A673 (cell line): ENCODE measurements at regions of chr9 and their contacts with region 1.

Region 1: DNA sequence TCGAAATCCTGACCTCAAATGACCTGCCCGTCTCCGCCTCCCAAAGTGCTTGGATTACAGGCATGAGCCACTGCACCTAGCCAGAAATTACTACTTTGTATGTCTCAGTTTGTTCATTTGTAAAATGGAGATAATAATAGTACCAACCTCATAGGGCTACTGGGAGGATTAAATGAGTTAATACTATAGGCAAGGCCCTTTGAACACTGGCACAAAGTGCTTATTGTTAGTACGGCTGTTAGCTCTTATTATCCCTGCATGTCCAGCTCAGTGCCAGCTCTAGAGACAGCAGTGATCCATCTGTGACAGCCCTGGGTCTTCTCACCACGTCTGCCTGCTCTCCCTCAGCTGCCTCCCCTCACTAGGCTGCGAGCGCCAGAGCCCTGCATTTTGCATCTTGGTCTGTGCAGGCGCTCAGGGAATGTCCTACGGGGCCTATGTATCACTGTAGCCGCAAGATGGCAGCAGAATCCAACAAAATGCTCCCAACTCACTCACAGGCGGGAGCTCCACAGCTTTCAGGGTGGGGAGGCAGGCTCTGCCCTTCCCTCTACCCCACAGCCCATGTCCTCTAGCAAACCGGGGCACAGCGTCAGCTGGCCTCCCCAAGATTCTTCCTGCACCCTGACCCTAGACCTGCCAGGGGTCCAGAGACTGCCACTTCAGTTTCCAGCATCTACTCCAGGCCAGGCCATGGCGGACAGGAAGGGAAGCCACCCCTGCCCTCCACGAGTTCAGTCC is 17.7 kb upstream of the AKNA start:
- DNase-seq: peak; percentile 88
- H3K4me3 ChIP-seq: no peak overlapping the region
- H3K27ac ChIP-seq: no peak overlapping the region
- H3K4me1 ChIP-seq: no peaks in the 10 kb centered on the region
- H3K27me3 ChIP-seq: no peaks in the 10 kb centered on the region
- CTCF ChIP-seq: peak; percentile 84

Region 2: GRCh38 chr9:114738581-114739316 is 333.3 kb after region 1 on chr9:
- CTCF ChIA-PET with region 1: no interaction called
- POLR2A ChIA-PET with region 1: no interaction called
- intact Hi-C with region 1: loop called (anchors 5 kb)
- DNase-seq: peak; percentile 82
- H3K4me3 ChIP-seq: no peak overlapping the region
- H3K27ac ChIP-seq: no peak overlapping the region
- H3K4me1 ChIP-seq: peaks cover 13% of the 10 kb centered on the region
- H3K27me3 ChIP-seq: no peaks in the 10 kb centered on the region
- CTCF ChIP-seq: peak; percentile 86